ENCODE measurements at regions of chr16 and their contacts with region 1.

Region 1: GRCh38 chr16:83449861-83450260 is 357.9 kb upstream of the HSBP1 start:
- DNase-seq: no peak
- ATAC-seq: no peak
- H3K4me3 ChIP-seq: no peak overlapping the region
- H3K4me3 Mint-ChIP-seq: no peak overlapping the region
- H3K27ac ChIP-seq: no peak overlapping the region
- H3K27ac Mint-ChIP-seq: no peak overlapping the region
- H3K4me1 ChIP-seq: no peaks in the 10 kb centered on the region
- H3K4me1 Mint-ChIP-seq: no peaks in the 10 kb centered on the region
- H3K27me3 ChIP-seq: no peaks in the 10 kb centered on the region
- H3K27me3 Mint-ChIP-seq: no peaks in the 10 kb centered on the region
- CTCF ChIP-seq: no peak

Region 2: DNA sequence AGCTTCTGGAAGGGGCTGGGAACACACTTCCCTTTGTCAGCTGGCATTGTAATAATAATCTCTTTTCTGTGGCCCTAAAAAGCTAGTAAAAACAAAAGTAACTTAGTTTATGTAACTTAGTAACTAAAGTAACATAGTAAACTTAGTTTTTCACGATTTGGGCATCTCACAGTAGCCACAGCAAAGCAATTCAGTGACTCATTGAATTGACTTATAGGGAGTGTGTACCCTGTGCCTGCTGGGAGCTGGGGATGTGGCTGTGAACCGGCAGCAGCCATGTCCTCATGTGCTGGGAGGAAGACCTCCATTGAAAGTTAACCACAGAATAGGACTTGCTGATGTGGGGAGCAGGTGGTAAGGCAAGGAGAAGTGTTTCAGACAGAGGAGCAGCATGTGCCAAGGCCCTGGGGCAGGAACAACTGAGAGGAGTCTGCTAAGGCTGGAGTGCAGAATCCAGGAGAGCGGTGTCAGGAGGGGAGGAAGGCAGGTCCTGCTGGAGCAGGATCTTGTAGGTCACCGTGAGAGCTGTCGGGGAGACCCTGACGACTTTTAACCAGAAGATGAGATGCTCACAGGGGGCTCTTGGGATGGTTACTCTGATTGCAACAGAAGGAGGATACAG is 1558.0 kb before region 1 on chr16:
- CTCF ChIA-PET with region 1: no interaction called
- POLR2A ChIA-PET with region 1: no interaction called
- intact Hi-C with region 1: loop called in 1 of 2 experiments (anchors 5 kb)
- DNase-seq: no peak
- ATAC-seq: no peak
- H3K4me3 ChIP-seq: no peak overlapping the region
- H3K4me3 Mint-ChIP-seq: no peak overlapping the region
- H3K27ac ChIP-seq: no peak overlapping the region
- H3K27ac Mint-ChIP-seq: no peak overlapping the region
- H3K4me1 ChIP-seq: no peaks in the 10 kb centered on the region
- H3K4me1 Mint-ChIP-seq: no peaks in the 10 kb centered on the region
- H3K27me3 ChIP-seq: no peaks in the 10 kb centered on the region
- H3K27me3 Mint-ChIP-seq: no peaks in the 10 kb centered on the region
- CTCF ChIP-seq: no peak

Region 3: DNA sequence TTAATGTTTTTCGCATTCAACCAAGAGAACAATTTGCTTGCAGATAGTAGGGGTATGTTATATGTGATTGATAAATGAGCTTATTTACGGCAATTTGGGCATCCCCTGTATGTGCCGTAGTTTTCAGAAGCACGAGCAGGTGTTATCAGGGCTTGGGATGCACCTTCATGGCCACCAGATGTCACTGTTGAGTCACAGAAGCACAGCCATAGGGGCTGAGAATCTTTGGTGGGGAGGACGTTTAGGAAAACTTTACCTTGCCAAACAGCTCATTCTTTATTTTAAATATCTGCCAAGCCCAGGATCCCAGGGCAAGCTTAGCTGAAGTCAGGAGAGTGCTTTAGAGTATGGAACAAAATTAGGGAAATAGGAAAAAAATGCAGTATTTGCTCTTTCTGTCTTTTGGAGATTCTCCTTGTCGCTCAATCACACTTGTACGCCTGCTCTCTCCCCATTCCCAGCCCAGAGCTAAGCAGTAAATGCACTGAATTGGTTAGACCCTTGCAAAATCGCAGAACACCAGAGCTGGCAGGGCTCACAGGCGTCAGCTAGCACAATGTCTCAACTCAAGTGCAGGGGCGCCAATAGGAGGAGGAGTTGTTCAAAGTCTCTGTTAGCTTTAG is 1186.2 kb before region 1 on chr16:
- CTCF ChIA-PET with region 1: no interaction called
- POLR2A ChIA-PET with region 1: no interaction called
- intact Hi-C with region 1: loop called in 1 of 2 experiments (anchors 2 kb)
- DNase-seq: peak; percentile 7 to 77 (median 28)
- ATAC-seq: no peak
- H3K4me3 ChIP-seq: no peak overlapping the region
- H3K4me3 Mint-ChIP-seq: no peak overlapping the region
- H3K27ac ChIP-seq: no peak overlapping the region
- H3K27ac Mint-ChIP-seq: no peak overlapping the region
- H3K4me1 ChIP-seq: no peaks in the 10 kb centered on the region
- H3K4me1 Mint-ChIP-seq: no peaks in the 10 kb centered on the region
- H3K27me3 ChIP-seq: no peaks in the 10 kb centered on the region
- H3K27me3 Mint-ChIP-seq: peaks cover 34% of the 10 kb centered on the region
- CTCF ChIP-seq: peak; percentile 86

Region 4: DNA sequence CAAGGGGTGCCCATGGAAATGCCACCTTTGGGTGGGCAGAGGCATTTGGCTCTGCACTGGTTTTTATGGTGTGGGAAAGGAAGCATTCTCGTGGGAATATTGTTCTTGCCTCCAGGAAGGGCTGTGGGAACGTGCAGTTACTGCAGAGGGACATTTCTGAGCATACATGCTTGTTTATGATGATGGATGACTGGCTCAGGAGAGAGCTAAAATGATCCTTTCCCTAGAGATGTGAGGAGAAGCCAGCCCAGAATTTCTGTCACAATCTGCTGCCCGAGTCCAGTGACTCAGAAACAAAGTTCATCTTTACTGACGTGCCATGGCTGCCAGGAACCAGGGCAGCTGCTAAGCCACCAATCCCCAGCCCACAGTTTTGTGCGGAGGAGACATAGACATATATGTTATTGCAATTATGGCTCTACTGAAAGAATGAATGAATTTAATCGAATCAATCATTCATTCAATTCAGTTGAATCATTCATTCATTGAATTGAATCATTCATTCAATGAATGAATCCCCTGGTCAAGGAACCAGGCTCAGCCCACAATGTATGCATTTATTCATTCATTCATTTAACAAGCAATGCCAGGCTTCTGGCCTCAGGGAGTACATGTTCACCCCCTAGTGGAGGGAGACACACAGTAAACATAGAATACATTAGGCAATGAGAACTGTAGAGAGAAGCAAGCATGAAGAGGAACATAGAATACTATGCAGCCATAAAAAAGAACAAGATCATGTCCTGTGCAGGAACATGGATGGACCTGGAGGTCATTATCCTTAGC is 56.5 kb before region 1 on chr16:
- CTCF ChIA-PET with region 1: no interaction called
- POLR2A ChIA-PET with region 1: no interaction called
- intact Hi-C with region 1: no loop called
- DNase-seq: no peak
- ATAC-seq: no peak
- H3K4me3 ChIP-seq: no peak overlapping the region
- H3K4me3 Mint-ChIP-seq: no peak overlapping the region
- H3K27ac ChIP-seq: no peak overlapping the region
- H3K27ac Mint-ChIP-seq: no peak overlapping the region
- H3K4me1 ChIP-seq: no peaks in the 10 kb centered on the region
- H3K4me1 Mint-ChIP-seq: no peaks in the 10 kb centered on the region
- H3K27me3 ChIP-seq: no peaks in the 10 kb centered on the region
- H3K27me3 Mint-ChIP-seq: no peaks in the 10 kb centered on the region
- CTCF ChIP-seq: no peak